KBM-7 (cell line): ENCODE measurements at regions of chr2 and their contacts with region 1.

Region 1: GRCh38 chr2:121974897-121975661 is 219.6 kb downstream of the TSN start:
- DNase-seq: peak; percentile 88

Region 2: GRCh38 chr2:121736462-121737341 is 238.4 kb before region 1 on chr2 and contains the start of gene NIFK:
- in situ Hi-C with region 1: no loop called
- DNase-seq: peak; percentile 90

Region 3: GRCh38 chr2:122277956-122278355 is 302.9 kb after region 1 on chr2:
- in situ Hi-C with region 1: loop called (anchors 25 kb)
- DNase-seq: no peak